Posterior vena cava (tissue), 2 donors: ENCODE measurements at regions of chr15 and their contacts with region 1.

Region 1: GRCh38 chr15:99059010-99059981 is 45.6 kb upstream of the SYNM start:
- DNase-seq: peak; percentile 95

Region 2: DNA sequence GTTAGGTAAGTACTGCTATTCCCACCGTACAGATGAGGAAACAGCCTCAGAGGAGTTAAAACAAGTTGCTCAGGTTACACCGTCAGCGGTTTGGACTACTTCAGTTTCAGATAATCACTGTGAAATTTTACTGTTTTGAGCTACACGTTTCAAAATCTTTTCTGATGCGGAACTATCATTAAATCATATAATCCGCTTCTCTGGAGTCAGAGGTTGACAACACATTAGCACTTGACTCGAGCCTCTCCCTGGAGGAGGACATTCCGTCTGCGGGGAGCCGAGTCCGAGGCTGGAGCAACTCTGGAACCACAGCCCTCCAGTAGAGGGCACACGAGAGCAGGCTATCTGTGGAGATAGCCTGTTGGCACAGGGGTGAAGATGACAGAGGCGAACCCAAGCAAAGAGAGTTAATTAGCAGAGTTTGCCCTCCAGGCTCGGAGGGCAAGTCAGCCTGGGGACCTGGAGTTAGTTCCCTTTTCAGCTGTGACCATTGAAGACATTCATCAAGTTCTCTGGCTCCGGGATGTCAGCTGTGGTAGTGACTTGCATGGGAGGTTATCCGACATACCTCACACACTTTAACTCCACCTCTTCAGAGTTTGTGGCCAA is 279.7 kb before region 1 on chr15:
- intact Hi-C with region 1: loop called in 1 of 2 experiments (anchors 10 kb)
- DNase-seq: peak; percentile 93

Region 3: DNA sequence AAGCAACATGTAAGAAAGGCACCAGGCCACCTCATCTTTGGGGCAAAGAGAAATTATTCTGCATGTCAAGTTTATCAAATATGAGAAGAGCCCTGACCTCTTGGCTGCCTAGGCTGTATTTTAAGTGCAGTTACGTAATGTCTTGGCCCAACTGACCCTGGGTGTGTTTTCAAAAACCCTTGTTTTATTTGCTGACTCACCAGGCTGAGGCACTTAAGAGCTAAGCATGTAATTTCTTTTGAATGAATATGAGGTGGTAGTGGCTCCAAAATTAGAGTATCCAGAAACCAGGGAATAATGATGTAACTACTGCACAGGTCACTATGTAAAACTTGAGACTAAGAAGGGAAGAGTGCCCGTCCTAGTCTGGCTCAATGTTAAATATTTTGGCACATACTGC is 76.0 kb before region 1 on chr15:
- intact Hi-C with region 1: no loop called
- DNase-seq: no peak

Region 4: DNA sequence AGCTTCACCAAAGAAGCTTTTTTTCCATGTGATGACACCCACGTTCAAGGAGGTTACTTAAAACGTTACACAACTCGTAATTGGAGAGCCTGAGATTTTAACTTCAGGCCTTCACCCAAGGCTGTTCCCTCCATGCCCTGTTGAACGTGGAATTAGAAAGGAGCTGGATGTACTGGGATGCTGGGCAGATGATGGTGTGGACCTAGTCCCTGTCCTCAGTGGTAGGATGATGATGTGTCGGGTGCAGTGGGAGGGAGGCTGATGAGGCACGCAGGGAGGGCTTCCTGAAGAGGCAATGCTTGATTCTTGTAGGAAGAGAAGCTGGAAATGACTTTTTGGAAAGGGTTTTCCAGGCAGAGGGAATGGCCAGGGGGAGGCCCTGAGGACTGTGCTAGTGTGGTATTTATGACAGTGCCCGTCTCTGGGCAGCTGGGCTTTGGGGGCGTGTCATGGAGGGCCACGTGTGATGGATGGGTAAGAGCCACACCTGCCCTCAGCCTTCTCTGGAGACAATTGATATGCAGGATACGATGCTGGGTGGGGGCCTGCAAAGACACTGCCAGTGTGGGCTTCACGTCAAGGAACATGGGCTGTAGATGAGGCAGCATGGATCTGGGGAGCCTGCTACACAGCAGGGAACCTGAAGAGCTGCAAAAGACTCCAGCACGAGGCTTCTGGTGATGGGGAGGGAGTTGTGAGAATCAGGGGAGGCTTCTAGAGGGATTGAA is 60.9 kb after region 1 on chr15:
- intact Hi-C with region 1: loop called in 1 of 2 experiments (anchors 2 kb)
- DNase-seq: peak; percentile 45